ENCODE measurements at regions of chr2 and their contacts with region 1.

Region 1: GRCh38 chr2:118269408-118270051 is 181.3 kb downstream of the INSIG2 start:
- DNase-seq: peak in 1 of 2 experiments; percentile 19
- H3K4me3 ChIP-seq: no peak overlapping the region
- H3K4me3 Mint-ChIP-seq: no peak overlapping the region
- H3K27ac Mint-ChIP-seq: no peak overlapping the region
- H3K4me1 ChIP-seq: no peaks in the 10 kb centered on the region
- H3K4me1 Mint-ChIP-seq: no peaks in the 10 kb centered on the region
- H3K27me3 ChIP-seq: peaks cover 3% of the 10 kb centered on the region
- H3K27me3 Mint-ChIP-seq: peaks cover 11% of the 10 kb centered on the region
- CTCF ChIP-seq: peak; percentile 32 to 47

Region 2: GRCh38 chr2:118221666-118222594 is 47.6 kb before region 1 on chr2:
- CTCF ChIA-PET with region 1: no interaction called
- POLR2A ChIA-PET with region 1: no interaction called
- intact Hi-C with region 1: loop called (anchors 5 kb)
- DNase-seq: peak in 1 of 2 experiments; percentile 63
- H3K4me3 ChIP-seq: no peak overlapping the region
- H3K4me3 Mint-ChIP-seq: no peak overlapping the region
- H3K27ac Mint-ChIP-seq: no peak overlapping the region
- H3K4me1 ChIP-seq: no peaks in the 10 kb centered on the region
- H3K4me1 Mint-ChIP-seq: no peaks in the 10 kb centered on the region
- H3K27me3 ChIP-seq: peaks cover 4% of the 10 kb centered on the region
- H3K27me3 Mint-ChIP-seq: peaks cover 23% of the 10 kb centered on the region
- CTCF ChIP-seq: peak; percentile 67 to 72

Region 3: GRCh38 chr2:118242216-118242615 is 27.3 kb before region 1 on chr2:
- CTCF ChIA-PET with region 1: no interaction called
- POLR2A ChIA-PET with region 1: no interaction called
- intact Hi-C with region 1: no loop called
- DNase-seq: no peak
- H3K4me3 ChIP-seq: no peak overlapping the region
- H3K4me3 Mint-ChIP-seq: no peak overlapping the region
- H3K27ac Mint-ChIP-seq: no peak overlapping the region
- H3K4me1 ChIP-seq: no peaks in the 10 kb centered on the region
- H3K4me1 Mint-ChIP-seq: no peaks in the 10 kb centered on the region
- H3K27me3 ChIP-seq: no peaks in the 10 kb centered on the region
- H3K27me3 Mint-ChIP-seq: peaks cover 12% of the 10 kb centered on the region
- CTCF ChIP-seq: no peak